Activated naive CD4-positive, alpha-beta T cell treated with anti-CD3 and anti-CD28 coated beads for 36 hours (primary cell): ENCODE measurements at regions of chr4 and their contacts with region 1.

Region 1: DNA sequence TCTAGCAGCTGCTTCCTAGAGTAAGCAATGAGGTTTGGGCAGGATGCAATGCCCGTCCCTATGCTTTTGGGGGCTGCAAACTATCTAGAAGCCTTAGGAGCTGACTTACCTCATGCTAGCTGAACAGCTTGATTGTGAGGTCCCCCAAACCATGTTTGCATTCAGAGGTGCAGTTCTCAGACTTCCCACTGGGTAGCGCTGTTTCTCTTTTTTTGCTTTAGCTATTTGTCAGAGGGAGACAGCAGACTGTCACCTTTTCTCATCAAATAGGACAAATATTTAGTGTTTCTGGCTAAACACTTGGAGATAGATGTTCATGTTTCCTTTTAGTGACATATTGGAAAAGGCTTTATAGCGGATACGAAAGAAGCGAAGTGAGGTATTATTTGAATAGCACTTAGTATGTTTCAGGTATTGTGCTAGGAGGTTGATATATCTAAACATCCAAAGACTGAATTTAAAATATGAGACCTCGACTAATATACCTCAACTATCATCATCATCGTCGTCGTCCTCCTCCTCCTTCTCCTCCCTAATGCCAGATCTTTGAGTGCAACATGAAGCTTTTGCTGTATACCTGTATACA is 18.7 kb upstream of the TMEM192 start:
- DNase-seq: peak; percentile 91
- H3K4me3 Mint-ChIP-seq: no peak overlapping the region
- H3K27ac Mint-ChIP-seq: no peak overlapping the region
- H3K4me1 Mint-ChIP-seq: peaks cover 2% of the 10 kb centered on the region
- H3K27me3 Mint-ChIP-seq: no peaks in the 10 kb centered on the region

Region 2: DNA sequence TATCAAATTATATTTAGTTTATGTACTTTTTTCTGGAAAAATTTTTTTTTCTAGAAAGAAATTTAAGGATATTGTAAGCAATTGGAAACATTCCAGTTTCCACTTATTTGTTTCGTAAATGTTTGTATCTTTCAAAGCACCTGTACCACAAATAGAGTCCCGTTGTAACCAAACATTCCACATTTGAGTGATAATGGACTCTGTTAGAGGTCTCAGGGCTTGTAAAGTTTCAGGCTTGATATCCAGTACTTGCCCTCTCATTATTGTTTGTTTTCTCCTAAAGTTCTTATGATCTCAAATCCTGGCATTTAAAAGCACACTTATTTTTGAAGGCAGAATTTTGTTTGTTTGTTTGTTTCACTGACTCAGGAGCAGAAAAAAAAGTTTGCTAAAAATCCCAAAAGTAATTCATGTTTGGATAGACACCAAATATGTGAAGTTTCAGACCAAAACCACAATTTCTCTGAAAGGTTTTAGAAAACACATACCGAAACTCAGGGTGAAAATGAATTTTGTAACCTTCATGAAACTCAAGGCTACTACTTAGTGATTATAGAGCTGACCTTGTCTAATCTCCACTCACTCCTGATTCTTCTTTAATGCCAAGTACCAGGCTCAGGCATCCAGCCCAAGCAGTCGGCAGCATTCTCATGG is 13.0 kb before region 1 on chr4:
- CTCF ChIA-PET with region 1: interaction called, 23 read pairs
- intact Hi-C with region 1: no loop called
- DNase-seq: no peak
- H3K4me3 Mint-ChIP-seq: no peak overlapping the region
- H3K27ac Mint-ChIP-seq: no peak overlapping the region
- H3K4me1 Mint-ChIP-seq: peaks cover 7% of the 10 kb centered on the region
- H3K27me3 Mint-ChIP-seq: peaks cover 2% of the 10 kb centered on the region

Region 3: GRCh38 chr4:165207431-165208220 is 76.3 kb after region 1 on chr4 and contains the start of gene KLHL2:
- CTCF ChIA-PET with region 1: interaction called, 4 read pairs
- intact Hi-C with region 1: loop called (anchors 1 kb)
- DNase-seq: peak; percentile 69
- H3K4me3 Mint-ChIP-seq: peak within 1 kb of the TSS; percentile 83
- H3K27ac Mint-ChIP-seq: peak within 1 kb of the TSS; percentile 92
- H3K4me1 Mint-ChIP-seq: peaks cover 71% of the 10 kb centered on the region
- H3K27me3 Mint-ChIP-seq: no peaks in the 10 kb centered on the region
- total RNA-seq, gene KLHL2: 36.8 to 39.2 TPM

Region 4: DNA sequence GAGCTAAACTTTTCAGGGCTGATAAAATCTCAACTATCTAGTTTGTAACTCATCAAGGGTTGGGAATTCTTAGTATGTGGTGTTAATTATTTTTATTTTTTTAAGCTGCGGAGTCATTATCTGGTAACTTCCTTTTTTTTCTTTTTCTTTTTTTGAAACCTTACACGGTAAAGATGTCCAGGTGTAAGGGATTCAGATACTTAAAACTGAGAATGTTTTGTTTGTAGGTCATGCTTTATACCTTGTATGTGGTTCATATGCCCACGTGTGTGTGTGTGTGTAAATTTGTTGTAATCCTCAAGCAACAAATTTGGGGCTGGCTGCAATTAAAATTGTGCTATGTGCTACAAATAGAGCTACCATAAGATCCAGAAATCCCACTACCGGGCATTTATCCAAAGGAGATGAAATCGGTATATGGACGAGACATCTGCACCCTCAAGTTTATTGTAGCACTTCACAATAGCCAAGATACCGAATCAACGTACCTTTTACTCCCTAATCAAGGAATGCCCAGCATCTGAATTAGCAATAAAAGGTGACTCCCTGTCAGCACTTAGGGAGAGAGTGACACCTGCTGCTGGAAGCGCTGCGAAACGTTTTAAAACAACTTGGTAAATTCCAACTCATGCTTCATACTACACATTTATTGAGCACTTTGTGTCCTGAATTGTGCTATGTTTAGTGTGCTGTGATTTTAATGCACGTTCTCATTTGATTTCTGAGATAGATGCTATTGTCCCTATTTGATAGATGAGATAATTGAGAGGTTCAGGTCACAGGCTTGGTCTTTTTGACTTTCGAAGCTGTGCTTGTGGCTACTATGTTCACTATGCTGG is 212.2 kb after region 1 on chr4:
- CTCF ChIA-PET with region 1: interaction called, 47 read pairs
- intact Hi-C with region 1: loop called (anchors 1 kb)
- DNase-seq: peak; percentile 50
- H3K4me3 Mint-ChIP-seq: no peak overlapping the region
- H3K27ac Mint-ChIP-seq: peak overlapping the region; percentile 19
- H3K4me1 Mint-ChIP-seq: no peaks in the 10 kb centered on the region
- H3K27me3 Mint-ChIP-seq: no peaks in the 10 kb centered on the region

Region 5: DNA sequence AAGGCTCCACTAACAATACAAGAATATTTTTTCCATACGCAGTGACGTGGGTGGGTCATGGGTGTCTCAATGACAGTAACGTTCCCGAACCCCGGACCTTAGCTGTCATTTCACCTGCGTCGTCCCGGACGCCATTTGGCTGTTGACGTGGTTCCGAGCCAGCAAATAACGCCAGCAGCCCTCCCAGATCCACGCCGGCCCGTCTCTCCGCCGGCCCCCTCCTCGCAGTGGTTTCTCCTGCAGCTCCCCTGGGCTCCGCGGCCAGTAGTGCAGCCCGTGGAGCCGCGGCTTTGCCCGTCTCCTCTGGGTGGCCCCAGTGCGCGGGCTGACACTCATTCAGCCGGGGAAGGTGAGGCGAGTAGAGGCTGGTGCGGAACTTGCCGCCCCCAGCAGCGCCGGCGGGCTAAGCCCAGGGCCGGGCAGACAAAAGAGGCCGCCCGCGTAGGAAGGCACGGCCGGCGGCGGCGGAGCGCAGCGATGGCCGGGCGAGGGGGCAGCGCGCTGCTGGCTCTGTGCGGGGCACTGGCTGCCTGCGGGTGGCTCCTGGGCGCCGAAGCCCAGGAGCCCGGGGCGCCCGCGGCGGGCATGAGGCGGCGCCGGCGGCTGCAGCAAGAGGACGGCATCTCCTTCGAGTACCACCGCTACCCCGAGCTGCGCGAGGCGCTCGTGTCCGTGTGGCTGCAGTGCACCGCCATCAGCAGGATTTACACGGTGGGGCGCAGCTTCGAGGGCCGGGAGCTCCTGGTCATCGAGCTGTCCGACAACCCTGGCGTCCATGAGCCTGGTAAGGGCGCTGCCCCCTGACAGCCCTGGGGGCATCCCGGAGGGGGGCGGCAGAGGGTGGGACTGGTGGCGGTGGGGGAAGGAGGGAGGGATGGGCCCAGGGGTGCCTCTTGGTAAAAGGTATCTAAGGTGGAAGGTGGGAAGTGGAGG is 247.7 kb after region 1 on chr4 and contains the start of gene CPE:
- CTCF ChIA-PET with region 1: interaction called, 3 read pairs
- intact Hi-C with region 1: loop called (anchors 1 kb)
- DNase-seq: peak; percentile 81
- H3K4me3 Mint-ChIP-seq: peak within 1 kb of the TSS; percentile 70
- H3K27ac Mint-ChIP-seq: no peak within 1 kb of the TSS
- H3K4me1 Mint-ChIP-seq: no peaks in the 10 kb centered on the region
- H3K27me3 Mint-ChIP-seq: peaks cover 19% of the 10 kb centered on the region
- total RNA-seq, gene CPE: 0.10 TPM in 1 of 2 experiments, not detected in the other

Region 6: GRCh38 chr4:165425629-165426028 is 294.3 kb after region 1 on chr4:
- CTCF ChIA-PET with region 1: no interaction called
- intact Hi-C with region 1: loop called (anchors 1 kb)
- DNase-seq: no peak
- H3K4me3 Mint-ChIP-seq: no peak overlapping the region
- H3K27ac Mint-ChIP-seq: no peak overlapping the region
- H3K4me1 Mint-ChIP-seq: no peaks in the 10 kb centered on the region
- H3K27me3 Mint-ChIP-seq: peaks cover 3% of the 10 kb centered on the region

Region 7: DNA sequence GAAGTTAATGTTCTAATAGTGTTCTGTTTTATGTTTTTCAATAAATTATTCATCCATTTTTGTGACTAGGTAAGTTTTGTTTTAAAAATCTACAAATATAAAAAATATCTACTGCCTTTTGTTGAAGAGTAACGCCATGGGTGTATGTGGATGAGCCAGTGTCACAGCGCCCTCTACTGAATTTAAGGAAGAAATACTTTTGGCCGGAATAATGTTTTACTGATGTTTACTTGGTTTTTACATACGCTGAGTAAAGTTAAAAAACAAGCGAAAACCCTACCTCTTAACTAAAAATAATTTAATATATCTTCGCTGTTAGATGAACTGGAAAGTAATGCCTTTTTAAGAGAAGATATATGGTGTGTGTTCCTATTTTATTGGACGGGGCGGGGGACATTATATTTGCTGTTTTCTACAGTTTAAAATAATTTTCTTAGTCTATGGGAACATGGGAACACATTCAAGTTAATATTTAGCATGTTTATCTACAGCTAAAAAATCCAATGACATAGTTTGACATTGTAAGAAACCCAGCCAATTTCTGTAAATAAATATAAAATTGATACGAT is 333.6 kb after region 1 on chr4:
- CTCF ChIA-PET with region 1: interaction called, 32 read pairs
- intact Hi-C with region 1: loop called (anchors 1 kb)
- DNase-seq: peak; percentile 26
- H3K4me3 Mint-ChIP-seq: no peak overlapping the region
- H3K27ac Mint-ChIP-seq: no peak overlapping the region
- H3K4me1 Mint-ChIP-seq: no peaks in the 10 kb centered on the region
- H3K27me3 Mint-ChIP-seq: no peaks in the 10 kb centered on the region